Spleen (tissue), 13 donors: ENCODE measurements at regions of chr1 and their contacts with region 1.

Region 1: DNA sequence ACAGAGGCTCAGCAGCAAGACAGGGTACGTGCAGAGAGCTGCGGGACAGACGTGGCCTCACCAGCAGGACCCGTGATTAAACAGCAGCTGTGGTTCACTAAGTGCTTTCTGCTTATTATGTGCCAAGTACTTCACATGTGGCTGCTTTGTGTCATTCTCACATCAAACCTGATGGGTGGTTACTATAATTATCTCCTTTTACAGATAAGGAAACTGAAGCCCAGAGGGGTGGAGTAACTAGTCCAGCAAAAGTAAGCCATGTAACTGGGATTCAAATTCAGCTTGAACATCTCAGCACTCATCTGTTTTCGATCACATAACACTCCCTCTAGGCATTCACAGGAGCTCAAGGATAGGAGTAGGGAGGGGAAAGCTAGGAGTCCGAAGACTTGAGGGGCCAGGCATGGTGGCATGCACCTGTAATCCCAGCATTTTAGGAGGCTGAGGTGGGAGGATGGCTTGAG is 50.8 kb upstream of the CLIC4 start:
- DNase-seq: no peak
- H3K4me3 ChIP-seq: no peak overlapping the region
- H3K27ac ChIP-seq: peak overlapping the region in 5 of 8 donors; percentile 28 to 74 (median 62)
- H3K4me1 ChIP-seq: peaks cover 20 to 35% (median 29%) of the 10 kb centered on the region in 6 donors
- H3K27me3 ChIP-seq: no peaks in the 10 kb centered on the region
- CTCF ChIP-seq: no peak
- POLR2A ChIP-seq: no peak

Region 2: DNA sequence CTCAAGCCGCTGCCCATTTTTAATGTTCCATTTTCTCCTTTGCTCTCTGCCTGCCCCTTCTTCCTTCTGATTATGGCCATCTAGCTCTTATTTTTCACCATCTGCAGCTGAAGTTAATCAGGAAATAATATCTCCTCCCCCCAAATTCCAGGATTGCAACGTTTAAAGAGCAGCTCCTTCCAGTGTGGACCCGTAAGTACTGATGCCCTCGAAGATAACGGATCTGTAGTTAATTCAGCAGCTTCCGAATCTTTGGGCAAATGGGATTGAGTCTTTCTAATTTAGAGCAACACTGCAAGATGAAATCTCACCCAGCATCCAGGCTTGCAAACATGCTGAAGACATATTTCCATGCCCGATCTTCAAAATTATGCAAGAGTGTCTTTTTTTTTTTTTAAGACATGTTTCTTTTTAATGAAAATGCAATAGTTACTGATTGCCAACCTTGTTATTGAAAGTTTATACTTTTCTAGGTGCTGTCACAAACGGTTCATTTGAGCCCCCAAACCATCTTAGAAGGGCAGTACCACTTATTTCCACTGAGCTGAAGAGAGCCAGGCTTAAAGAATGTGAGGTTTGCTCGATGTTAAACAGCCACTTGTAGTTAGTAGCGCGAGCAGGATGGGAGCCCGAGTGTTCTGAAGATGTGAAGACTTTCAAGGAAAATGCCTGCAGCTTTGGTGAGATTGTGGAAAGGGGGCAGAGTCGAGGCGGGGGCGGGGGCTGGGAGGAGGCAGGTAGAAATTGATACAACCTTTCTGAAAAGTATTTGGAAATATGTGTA is 202.6 kb before region 1 on chr1:
- intact Hi-C with region 1: no loop called
- DNase-seq: no peak
- H3K4me3 ChIP-seq: no peak overlapping the region
- H3K27ac ChIP-seq: no peak overlapping the region
- H3K4me1 ChIP-seq: peaks cover 0 to 5% (median 0%) of the 10 kb centered on the region in 6 donors
- H3K27me3 ChIP-seq: peaks cover 0 to 19% (median 0%) of the 10 kb centered on the region in 7 donors
- CTCF ChIP-seq: no peak
- POLR2A ChIP-seq: no peak

Region 3: GRCh38 chr1:24744911-24745710 is 50.7 kb after region 1 on chr1 and contains the start of gene CLIC4:
- intact Hi-C with region 1: loop called (anchors 10 kb)
- DNase-seq: peak; percentile 100
- H3K4me3 ChIP-seq: peak within 1 kb of the TSS; percentile 70 to 96 (median 80)
- H3K27ac ChIP-seq: peak within 1 kb of the TSS; percentile 74 to 94 (median 91)
- H3K4me1 ChIP-seq: peaks cover 16 to 89% (median 58%) of the 10 kb centered on the region in 6 donors
- H3K27me3 ChIP-seq: no peaks in the 10 kb centered on the region
- CTCF ChIP-seq: peak in 4 of 11 experiments; percentile 34 to 53 (median 45)
- POLR2A ChIP-seq: peak in 2 of 3 donors; percentile 84 to 94
- total RNA-seq, gene CLIC4: 60.9 to 99.6 (median 73.8) TPM